ENCODE measurements at regions of chr3 and their contacts with region 1.

Region 1: GRCh38 chr3:141460097-141460704 is 26.6 kb upstream of the RASA2 start:
- DNase-seq: peak; percentile 75
- ATAC-seq: peak; percentile 100
- H3K4me3 ChIP-seq: no peak overlapping the region
- H3K27ac ChIP-seq: no peak overlapping the region
- H3K4me1 ChIP-seq: peaks cover 0 to 5% of the 10 kb centered on the region in 2 experiments; a peak in 2 of 4 replicates
- H3K27me3 ChIP-seq: no peaks in the 10 kb centered on the region
- CTCF ChIP-seq: peak; percentile 88 to 90 (median 90)
- POLR2A ChIP-seq: no peak
- RAD21 ChIP-seq: peak; percentile 96

Region 2: DNA sequence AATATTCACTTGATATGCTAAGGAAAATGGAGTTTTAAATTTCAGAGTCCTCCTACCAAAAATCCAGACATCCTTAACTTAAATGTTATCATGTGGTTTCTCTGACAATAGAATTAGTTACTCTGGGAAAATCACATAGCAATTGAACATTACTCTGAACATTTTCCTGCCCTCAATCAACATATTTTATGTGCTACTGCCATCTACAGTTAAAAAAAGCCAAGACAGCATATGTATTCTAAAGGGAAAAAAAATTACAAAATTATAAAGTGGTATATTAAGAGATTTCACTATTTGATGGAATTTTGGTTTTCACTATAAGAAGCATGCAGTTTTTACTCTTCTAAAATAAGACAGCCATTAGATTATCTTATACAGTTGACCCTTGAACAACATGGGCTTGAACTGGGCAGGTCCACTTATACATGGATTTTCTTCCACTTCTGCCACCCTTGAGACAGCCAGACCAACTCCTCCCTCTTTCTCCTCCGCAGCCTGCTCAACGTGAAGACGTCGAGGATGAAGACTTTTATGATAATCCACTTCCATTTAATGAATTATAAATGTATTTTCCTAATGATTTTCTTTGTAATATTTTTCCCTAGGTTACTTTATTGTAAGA is 538.6 kb after region 1 on chr3:
- CTCF ChIA-PET with region 1: no interaction called
- POLR2A ChIA-PET with region 1: no interaction called
- RAD21 ChIA-PET with region 1: no interaction called
- intact Hi-C with region 1: loop called (anchors 10 kb)
- DNase-seq: no peak
- ATAC-seq: peak; percentile 67
- H3K4me3 ChIP-seq: no peak overlapping the region
- H3K27ac ChIP-seq: no peak overlapping the region
- H3K4me1 ChIP-seq: peaks cover 7 to 14% of the 10 kb centered on the region in 2 experiments; a peak in 3 of 4 replicates
- H3K27me3 ChIP-seq: no peaks in the 10 kb centered on the region
- CTCF ChIP-seq: peak in 2 of 3 experiments; percentile 41 to 59; a peak in 3 of 6 replicates
- POLR2A ChIP-seq: no peak
- RAD21 ChIP-seq: peak; percentile 69